ENCODE measurements at regions of chrX and their contacts with region 1.

Region 1: DNA sequence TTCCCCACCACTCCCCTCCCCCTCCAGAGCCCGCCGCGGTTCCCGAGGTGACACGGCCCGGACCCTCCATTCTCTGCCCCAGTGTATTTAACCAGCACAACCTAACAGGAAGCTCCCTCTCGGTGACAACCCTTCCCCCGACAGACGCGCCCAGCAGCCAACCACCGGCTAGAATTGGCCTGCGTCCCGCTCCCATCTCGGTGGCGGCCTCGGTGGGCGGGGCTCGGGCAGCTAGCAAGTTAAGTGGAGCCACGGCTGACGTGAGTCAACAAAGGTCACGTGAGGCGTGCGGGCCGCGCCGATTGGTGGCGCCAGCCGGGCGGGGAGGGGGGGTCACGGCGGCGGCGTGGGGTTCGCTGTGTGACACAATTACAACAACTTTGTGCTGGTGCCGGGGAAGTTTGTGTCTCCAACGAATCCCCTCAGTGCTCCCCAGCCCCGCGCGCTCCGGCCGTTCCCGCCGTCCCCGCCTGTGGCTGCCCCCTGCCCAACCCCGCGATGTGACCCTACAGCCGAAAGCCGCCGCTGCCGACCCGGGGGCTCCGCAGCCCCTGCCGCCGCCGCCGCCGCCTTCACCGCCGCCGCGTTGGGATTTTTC is at the start of gene KDM6A:
- DNase-seq: peak; percentile 98
- ATAC-seq: peak; percentile 92
- total RNA-seq, gene KDM6A: 13.5 TPM

Region 2: GRCh38 chrX:44914532-44915198 is 41.7 kb after region 1 on chrX:
- intact Hi-C with region 1: no loop called
- DNase-seq: no peak
- ATAC-seq: no peak

Region 3: GRCh38 chrX:44945736-44946135 is 72.8 kb after region 1 on chrX:
- intact Hi-C with region 1: loop called (anchors 10 kb)
- DNase-seq: no peak
- ATAC-seq: no peak

Region 4: GRCh38 chrX:45070116-45071007 is 197.4 kb after region 1 on chrX:
- intact Hi-C with region 1: loop called (anchors 2 kb)
- DNase-seq: no peak
- ATAC-seq: no peak

Region 5: DNA sequence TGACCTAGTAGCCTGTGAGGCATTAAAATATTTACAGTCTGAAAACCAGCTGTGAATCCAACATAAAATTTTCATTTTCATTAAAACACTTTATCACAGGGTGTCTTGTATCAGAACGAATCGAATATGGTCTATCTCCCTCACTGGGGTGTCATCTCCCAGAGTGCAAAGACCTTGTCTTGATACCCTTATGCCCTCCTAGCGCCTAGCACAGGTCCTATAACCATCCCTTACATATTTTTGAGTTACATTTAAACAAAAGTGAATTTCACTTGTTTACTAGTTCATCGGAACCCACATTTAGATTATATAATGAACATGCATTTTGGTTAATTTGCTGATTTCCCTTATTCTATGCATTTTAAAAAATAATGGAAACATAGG is 313.7 kb after region 1 on chrX:
- intact Hi-C with region 1: loop called (anchors 2 kb)
- DNase-seq: no peak
- ATAC-seq: no peak

Measured in Right ventricle myocardium inferior (tissue), 1 donor.